ENCODE measurements at regions of chr2 and their contacts with region 1.

Region 1: GRCh38 chr2:99066075-99066958 is 75.2 kb upstream of the C2orf15 start:
- DNase-seq: peak; percentile 68
- H3K4me3 Mint-ChIP-seq: no peak overlapping the region
- H3K27ac Mint-ChIP-seq: no peak overlapping the region
- H3K4me1 Mint-ChIP-seq: no peaks in the 10 kb centered on the region
- H3K27me3 Mint-ChIP-seq: no peaks in the 10 kb centered on the region
- CTCF ChIP-seq: peak; percentile 57

Region 2: DNA sequence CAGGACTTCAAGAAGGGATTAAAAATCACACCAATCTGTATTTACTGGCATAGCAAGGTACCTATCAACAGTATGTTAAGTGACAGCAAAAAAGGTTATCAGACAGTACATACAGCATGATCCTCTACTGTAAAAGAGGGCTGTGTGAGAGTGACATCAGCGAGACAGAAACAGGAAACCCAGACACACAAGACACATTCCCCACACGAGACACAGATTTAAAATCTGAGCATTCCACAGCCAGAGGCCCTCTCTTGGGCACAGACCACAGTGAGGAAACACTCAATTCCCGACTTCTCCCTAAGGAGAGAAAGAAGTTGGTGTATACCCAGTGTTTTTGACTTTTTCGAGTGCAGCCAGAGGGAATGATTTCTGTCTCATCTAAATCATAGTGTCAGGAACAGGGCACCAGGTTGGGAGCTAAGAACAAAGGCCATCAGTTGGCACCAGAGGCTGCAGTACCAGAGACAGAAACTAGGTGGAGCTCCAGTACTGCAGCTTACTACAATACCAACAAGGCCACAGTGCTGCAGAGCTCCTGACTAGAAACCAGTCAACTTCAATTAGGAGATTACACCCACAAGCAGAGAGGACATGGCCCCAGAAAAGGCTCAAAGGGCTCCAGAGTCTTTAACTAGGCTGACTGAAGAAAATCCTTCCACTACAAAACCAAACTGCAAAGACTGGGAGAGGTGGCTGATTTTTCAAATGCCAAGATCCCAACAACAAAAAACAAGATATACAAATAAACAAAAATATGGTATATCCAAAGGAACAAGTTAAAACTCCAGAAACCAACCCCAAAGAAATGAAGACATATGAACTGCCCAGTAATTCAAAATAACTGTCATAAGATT is 417.0 kb before region 1 on chr2:
- CTCF ChIA-PET with region 1: interaction called, 40 read pairs
- POLR2A ChIA-PET with region 1: interaction called, 15 read pairs
- intact Hi-C with region 1: loop called (anchors 1 kb)
- DNase-seq: peak; percentile 80
- H3K4me3 Mint-ChIP-seq: no peak overlapping the region
- H3K27ac Mint-ChIP-seq: no peak overlapping the region
- H3K4me1 Mint-ChIP-seq: no peaks in the 10 kb centered on the region
- H3K27me3 Mint-ChIP-seq: no peaks in the 10 kb centered on the region
- CTCF ChIP-seq: peak; percentile 97

Region 3: DNA sequence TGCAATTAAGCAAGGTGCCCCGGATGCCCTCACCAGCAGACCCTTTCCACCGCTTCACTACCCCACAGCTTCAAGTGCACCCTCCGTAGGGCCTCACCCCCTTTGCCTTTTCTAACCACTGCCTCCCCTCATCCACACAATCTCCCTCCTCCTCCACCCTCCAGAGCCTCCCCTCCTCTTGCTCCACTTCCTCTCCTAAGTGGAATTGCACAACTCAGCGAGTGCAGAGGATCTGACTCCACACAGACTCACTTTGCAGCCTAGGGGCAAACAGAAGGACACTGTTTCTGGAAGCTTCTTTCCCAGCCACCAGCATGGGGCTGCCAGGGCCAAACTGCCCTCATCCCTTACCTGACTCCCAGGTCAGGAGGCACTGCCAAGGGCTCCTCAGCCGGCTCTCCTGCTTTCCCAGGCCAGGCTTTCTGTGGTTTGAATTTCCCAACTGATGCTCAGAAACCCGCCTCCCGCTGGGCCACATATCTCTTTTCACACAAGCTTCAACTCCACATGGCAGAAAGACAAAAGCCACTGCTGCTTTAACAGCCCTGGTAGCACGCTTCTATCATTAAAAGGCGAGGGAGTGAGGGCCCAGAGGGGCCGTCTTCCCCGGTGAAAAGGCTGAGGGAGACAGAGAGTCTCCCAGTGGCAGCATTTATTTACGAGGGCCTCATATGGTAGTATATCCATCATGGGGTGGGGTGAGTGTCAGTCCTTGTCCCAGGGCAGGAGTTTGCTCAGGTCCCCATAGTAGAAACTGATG is 260.7 kb before region 1 on chr2:
- CTCF ChIA-PET with region 1: interaction called, 5 read pairs
- POLR2A ChIA-PET with region 1: no interaction called
- intact Hi-C with region 1: loop called (anchors 1 kb)
- DNase-seq: peak; percentile 97
- H3K4me3 Mint-ChIP-seq: peak overlapping the region; percentile 40
- H3K27ac Mint-ChIP-seq: peak overlapping the region; percentile 22
- H3K4me1 Mint-ChIP-seq: peaks cover 40% of the 10 kb centered on the region
- H3K27me3 Mint-ChIP-seq: no peaks in the 10 kb centered on the region
- CTCF ChIP-seq: no peak

Region 4: GRCh38 chr2:98869940-98870263 is 196.4 kb before region 1 on chr2:
- CTCF ChIA-PET with region 1: interaction called, 3 read pairs
- POLR2A ChIA-PET with region 1: no interaction called
- intact Hi-C with region 1: loop called (anchors 5 kb)
- DNase-seq: peak; percentile 71
- H3K4me3 Mint-ChIP-seq: peak overlapping the region; percentile 72
- H3K27ac Mint-ChIP-seq: peak overlapping the region; percentile 99
- H3K4me1 Mint-ChIP-seq: peaks cover 36% of the 10 kb centered on the region
- H3K27me3 Mint-ChIP-seq: no peaks in the 10 kb centered on the region
- CTCF ChIP-seq: no peak

Region 5: GRCh38 chr2:98936353-98937351 is 129.7 kb before region 1 on chr2:
- CTCF ChIA-PET with region 1: interaction called, 10 read pairs
- POLR2A ChIA-PET with region 1: interaction called, 3 read pairs
- intact Hi-C with region 1: loop called (anchors 1 kb)
- DNase-seq: peak; percentile 39
- H3K4me3 Mint-ChIP-seq: peak overlapping the region; percentile 72
- H3K27ac Mint-ChIP-seq: no peak overlapping the region
- H3K4me1 Mint-ChIP-seq: peaks cover 13% of the 10 kb centered on the region
- H3K27me3 Mint-ChIP-seq: no peaks in the 10 kb centered on the region
- CTCF ChIP-seq: peak; percentile 49

Measured in MCF 10A (cell line).